ENCODE measurements at regions of chr5 and their contacts with region 1.

Region 1: DNA sequence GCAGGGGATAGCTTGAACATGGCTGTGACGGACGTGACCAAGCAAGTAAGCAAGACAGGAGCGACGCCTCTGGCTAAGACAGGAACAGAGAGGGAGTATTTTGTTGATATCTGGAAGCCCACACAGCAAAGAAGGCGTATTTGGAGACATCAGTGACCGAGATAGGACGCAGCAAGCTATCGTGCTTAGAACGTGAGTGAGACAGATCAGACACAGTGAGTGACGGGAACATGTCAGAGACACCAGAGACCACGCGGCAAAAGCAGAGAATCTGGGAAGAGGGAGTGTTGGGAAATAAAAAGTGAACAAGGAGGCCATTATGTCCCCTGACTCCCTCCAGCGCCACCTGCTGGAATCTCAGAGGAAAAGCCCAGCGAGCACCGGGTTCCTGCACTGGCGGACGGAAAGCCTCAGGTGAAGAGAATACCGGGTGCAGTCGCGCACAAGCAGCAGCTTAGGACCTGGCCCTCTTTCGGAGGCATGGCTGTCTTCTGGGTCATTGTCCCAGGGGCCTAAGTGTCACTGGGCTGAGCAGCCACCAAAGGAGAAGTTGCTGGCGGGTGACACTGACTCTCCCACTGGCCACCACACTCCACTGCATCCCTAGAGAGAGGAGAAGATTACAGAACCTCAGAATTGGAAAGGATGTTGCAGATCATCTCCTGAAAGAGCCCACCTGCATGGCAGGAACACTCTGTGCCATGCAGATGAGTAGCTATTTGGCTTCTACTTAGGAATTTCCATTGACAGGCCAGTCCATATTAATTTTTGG is 99.1 kb downstream of the FBXO38 start:
- DNase-seq: peak; percentile 85
- ATAC-seq: peak; percentile 88
- H3K4me3 Mint-ChIP-seq: no peak overlapping the region
- H3K27ac Mint-ChIP-seq: no peak overlapping the region
- H3K4me1 Mint-ChIP-seq: peaks cover 5% of the 10 kb centered on the region
- H3K27me3 Mint-ChIP-seq: peaks cover 33% of the 10 kb centered on the region

Region 2: GRCh38 chr5:147857302-147858129 is 625.4 kb before region 1 on chr5:
- CTCF ChIA-PET with region 1: no interaction called
- POLR2A ChIA-PET with region 1: no interaction called
- intact Hi-C with region 1: no loop called
- DNase-seq: peak; percentile 68
- ATAC-seq: peak; percentile 71
- H3K4me3 Mint-ChIP-seq: no peak overlapping the region
- H3K27ac Mint-ChIP-seq: no peak overlapping the region
- H3K4me1 Mint-ChIP-seq: no peaks in the 10 kb centered on the region
- H3K27me3 Mint-ChIP-seq: peaks cover 9% of the 10 kb centered on the region

Region 3: GRCh38 chr5:147949711-147950573 is 532.9 kb before region 1 on chr5:
- CTCF ChIA-PET with region 1: no interaction called
- POLR2A ChIA-PET with region 1: no interaction called
- intact Hi-C with region 1: loop called in 1 of 2 experiments (anchors 10 kb)
- DNase-seq: no peak
- ATAC-seq: no peak
- H3K4me3 Mint-ChIP-seq: no peak overlapping the region
- H3K27ac Mint-ChIP-seq: no peak overlapping the region
- H3K4me1 Mint-ChIP-seq: no peaks in the 10 kb centered on the region
- H3K27me3 Mint-ChIP-seq: peaks cover 6% of the 10 kb centered on the region

Region 4: DNA sequence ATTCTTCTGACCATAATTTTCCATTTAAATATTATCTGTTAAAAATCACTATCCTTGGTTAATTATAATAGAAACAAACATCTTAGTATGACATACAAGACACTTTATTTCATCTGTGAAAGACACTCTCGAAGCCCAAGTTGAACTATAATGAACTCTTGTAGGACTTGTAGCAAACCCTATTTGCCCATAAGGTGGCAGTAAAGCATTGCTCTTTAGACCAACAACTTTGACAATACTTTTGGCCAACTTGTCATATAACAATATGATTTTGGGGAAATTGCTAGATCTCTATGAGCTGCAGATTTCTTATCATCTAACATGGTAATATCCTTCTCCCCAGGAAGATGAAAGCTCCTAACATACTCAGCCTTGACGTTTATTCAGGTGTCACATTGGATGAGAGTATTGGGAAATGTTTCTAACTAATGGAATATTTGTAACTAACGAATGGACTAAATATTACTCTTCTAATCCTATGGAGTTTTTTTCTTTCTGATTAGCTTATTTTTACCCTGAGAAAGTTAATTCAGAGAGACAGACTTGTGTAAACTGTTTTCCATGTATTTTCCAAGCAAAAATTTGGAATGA is 303.5 kb before region 1 on chr5:
- CTCF ChIA-PET with region 1: interaction called, 3 read pairs
- POLR2A ChIA-PET with region 1: no interaction called
- intact Hi-C with region 1: loop called (anchors 1 to 5 kb)
- DNase-seq: no peak
- ATAC-seq: peak; percentile 53
- H3K4me3 Mint-ChIP-seq: no peak overlapping the region
- H3K27ac Mint-ChIP-seq: no peak overlapping the region
- H3K4me1 Mint-ChIP-seq: no peaks in the 10 kb centered on the region
- H3K27me3 Mint-ChIP-seq: peaks cover 17% of the 10 kb centered on the region

Region 5: GRCh38 chr5:148290271-148291195 is 192.3 kb before region 1 on chr5:
- CTCF ChIA-PET with region 1: interaction called, 3 read pairs
- POLR2A ChIA-PET with region 1: no interaction called
- intact Hi-C with region 1: loop called in 1 of 2 experiments (anchors 1 kb)
- DNase-seq: no peak
- ATAC-seq: no peak
- H3K4me3 Mint-ChIP-seq: no peak overlapping the region
- H3K27ac Mint-ChIP-seq: no peak overlapping the region
- H3K4me1 Mint-ChIP-seq: no peaks in the 10 kb centered on the region
- H3K27me3 Mint-ChIP-seq: peaks cover 6% of the 10 kb centered on the region

Region 6: DNA sequence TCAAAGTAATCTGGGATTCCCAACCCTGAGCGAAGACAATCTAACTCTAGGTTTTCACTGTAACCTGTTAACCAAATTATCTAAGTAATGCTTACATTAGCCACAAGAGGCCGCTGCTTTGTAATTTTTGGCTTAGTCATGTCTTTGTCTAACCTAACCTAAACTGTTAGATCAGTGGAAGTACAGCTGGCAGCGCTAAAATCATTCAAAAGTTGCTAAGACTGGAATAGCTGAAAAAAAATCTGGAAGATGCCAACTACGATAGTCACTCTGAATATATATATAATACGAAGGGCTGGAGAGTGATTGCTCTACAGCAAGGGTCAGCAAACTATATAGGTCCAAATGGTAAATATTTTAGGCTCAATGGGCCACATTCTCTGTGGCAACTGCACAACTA is 38.9 kb before region 1 on chr5:
- CTCF ChIA-PET with region 1: interaction called, 5 read pairs
- POLR2A ChIA-PET with region 1: no interaction called
- intact Hi-C with region 1: loop called (anchors 1 to 2 kb)
- DNase-seq: peak; percentile 63
- ATAC-seq: peak; percentile 83
- H3K4me3 Mint-ChIP-seq: no peak overlapping the region
- H3K27ac Mint-ChIP-seq: no peak overlapping the region
- H3K4me1 Mint-ChIP-seq: no peaks in the 10 kb centered on the region
- H3K27me3 Mint-ChIP-seq: no peaks in the 10 kb centered on the region